CD8-positive, alpha-beta T cell (primary cell): ENCODE measurements at regions of chr1 and their contacts with region 1.

Region 1: GRCh38 chr1:183580281-183580682 is 10.0 kb downstream of the NCF2 start:
- DNase-seq: peak in 2 of 9 experiments; percentile 7 to 31
- ATAC-seq: peak; percentile 29
- H3K4me3 ChIP-seq: no peak overlapping the region
- H3K4me3 Mint-ChIP-seq: peak overlapping the region; percentile 69
- H3K27ac ChIP-seq: no peak overlapping the region
- H3K27ac Mint-ChIP-seq: no peak overlapping the region
- H3K4me1 ChIP-seq: no peaks in the 10 kb centered on the region
- H3K4me1 Mint-ChIP-seq: peaks cover 15% of the 10 kb centered on the region
- H3K27me3 ChIP-seq: no peaks in the 10 kb centered on the region
- H3K27me3 Mint-ChIP-seq: no peaks in the 10 kb centered on the region
- CTCF ChIP-seq: no peak

Region 2: DNA sequence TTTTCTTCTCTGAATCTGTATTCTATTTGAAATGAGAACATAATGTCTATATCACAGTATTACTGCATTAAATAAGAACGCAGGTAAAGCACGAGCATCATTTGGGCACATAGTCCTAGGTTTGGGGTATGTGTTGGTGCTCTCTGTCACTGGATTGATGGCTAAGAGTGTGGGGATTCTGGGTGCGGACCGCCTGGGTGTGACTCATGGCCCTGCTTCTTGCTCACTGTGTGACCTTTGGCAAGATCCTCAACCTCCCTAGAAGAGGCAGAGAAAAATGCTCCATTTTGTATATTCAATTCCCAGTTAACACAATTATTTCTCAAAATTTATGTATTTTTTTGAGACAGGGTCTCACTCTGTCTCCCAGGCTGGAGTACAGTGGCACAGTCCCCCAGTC is 294.5 kb before region 1 on chr1:
- CTCF ChIA-PET with region 1: no interaction called
- POLR2A ChIA-PET with region 1: no interaction called
- intact Hi-C with region 1: no loop called
- DNase-seq: no peak
- ATAC-seq: no peak
- H3K4me3 ChIP-seq: no peak overlapping the region
- H3K4me3 Mint-ChIP-seq: no peak overlapping the region
- H3K27ac ChIP-seq: no peak overlapping the region
- H3K27ac Mint-ChIP-seq: no peak overlapping the region
- H3K4me1 ChIP-seq: no peaks in the 10 kb centered on the region
- H3K4me1 Mint-ChIP-seq: no peaks in the 10 kb centered on the region
- H3K27me3 ChIP-seq: no peaks in the 10 kb centered on the region
- H3K27me3 Mint-ChIP-seq: peaks cover 7% of the 10 kb centered on the region
- CTCF ChIP-seq: no peak

Region 3: DNA sequence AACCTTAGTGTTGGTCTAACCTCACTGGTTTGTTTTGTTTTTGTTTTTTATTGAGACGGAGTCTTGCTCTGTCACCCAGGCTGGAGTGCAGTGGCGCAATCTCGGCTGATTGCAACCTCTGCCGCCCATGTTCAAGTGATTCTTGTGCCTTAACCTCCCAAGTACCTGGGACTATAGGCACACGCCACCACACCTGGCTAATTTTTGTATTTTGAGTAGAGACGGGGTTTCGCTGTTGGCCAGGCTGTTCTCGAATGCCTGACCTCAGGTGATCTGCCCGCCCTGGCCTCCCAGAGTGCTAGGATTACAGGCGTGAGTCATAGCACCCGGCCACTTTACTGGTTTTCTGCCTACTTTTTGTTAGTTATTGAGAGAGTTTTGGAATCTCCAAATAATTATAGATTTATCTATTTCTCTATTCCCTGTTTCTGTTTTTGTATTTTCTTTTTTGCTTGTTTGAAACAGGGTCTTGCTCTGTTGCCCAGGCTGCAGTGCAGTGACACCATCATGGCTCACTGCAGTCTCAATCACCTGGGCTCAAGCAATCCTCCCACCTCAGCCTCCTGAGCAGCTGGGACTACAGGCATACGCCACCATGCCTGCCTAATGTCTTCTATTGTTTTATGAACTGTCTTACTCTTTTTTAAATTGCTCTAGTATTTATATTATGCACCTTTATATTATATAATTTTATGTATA is 86.6 kb before region 1 on chr1:
- CTCF ChIA-PET with region 1: no interaction called
- POLR2A ChIA-PET with region 1: no interaction called
- intact Hi-C with region 1: no loop called
- DNase-seq: no peak
- ATAC-seq: no peak
- H3K4me3 ChIP-seq: no peak overlapping the region
- H3K4me3 Mint-ChIP-seq: no peak overlapping the region
- H3K27ac ChIP-seq: no peak overlapping the region
- H3K27ac Mint-ChIP-seq: no peak overlapping the region
- H3K4me1 ChIP-seq: peaks cover 8% of the 10 kb centered on the region
- H3K4me1 Mint-ChIP-seq: peaks cover 70% of the 10 kb centered on the region
- H3K27me3 ChIP-seq: no peaks in the 10 kb centered on the region
- H3K27me3 Mint-ChIP-seq: no peaks in the 10 kb centered on the region
- CTCF ChIP-seq: no peak

Region 4: GRCh38 chr1:183609313-183609712 is 29.0 kb after region 1 on chr1:
- CTCF ChIA-PET with region 1: no interaction called
- POLR2A ChIA-PET with region 1: no interaction called
- intact Hi-C with region 1: no loop called
- DNase-seq: peak in 1 of 9 experiments; percentile 21
- ATAC-seq: no peak
- H3K4me3 ChIP-seq: no peak overlapping the region
- H3K4me3 Mint-ChIP-seq: no peak overlapping the region
- H3K27ac ChIP-seq: no peak overlapping the region
- H3K27ac Mint-ChIP-seq: no peak overlapping the region
- H3K4me1 ChIP-seq: no peaks in the 10 kb centered on the region
- H3K4me1 Mint-ChIP-seq: peaks cover 8% of the 10 kb centered on the region
- H3K27me3 ChIP-seq: no peaks in the 10 kb centered on the region
- H3K27me3 Mint-ChIP-seq: peaks cover 7% of the 10 kb centered on the region
- CTCF ChIP-seq: no peak

Region 5: GRCh38 chr1:183622884-183623785 is 42.9 kb after region 1 on chr1:
- CTCF ChIA-PET with region 1: no interaction called
- POLR2A ChIA-PET with region 1: no interaction called
- intact Hi-C with region 1: loop called in 1 of 2 experiments (anchors 2 kb)
- DNase-seq: peak in 8 of 9 experiments; percentile 13 to 72 (median 52)
- ATAC-seq: peak; percentile 99
- H3K4me3 ChIP-seq: no peak overlapping the region
- H3K4me3 Mint-ChIP-seq: no peak overlapping the region
- H3K27ac ChIP-seq: no peak overlapping the region
- H3K27ac Mint-ChIP-seq: peak overlapping the region; percentile 89
- H3K4me1 ChIP-seq: peaks cover 6% of the 10 kb centered on the region
- H3K4me1 Mint-ChIP-seq: peaks cover 38% of the 10 kb centered on the region
- H3K27me3 ChIP-seq: no peaks in the 10 kb centered on the region
- H3K27me3 Mint-ChIP-seq: no peaks in the 10 kb centered on the region
- CTCF ChIP-seq: peak; percentile 51